ENCODE measurements at regions of chr11 and their contacts with region 1.

Region 1: DNA sequence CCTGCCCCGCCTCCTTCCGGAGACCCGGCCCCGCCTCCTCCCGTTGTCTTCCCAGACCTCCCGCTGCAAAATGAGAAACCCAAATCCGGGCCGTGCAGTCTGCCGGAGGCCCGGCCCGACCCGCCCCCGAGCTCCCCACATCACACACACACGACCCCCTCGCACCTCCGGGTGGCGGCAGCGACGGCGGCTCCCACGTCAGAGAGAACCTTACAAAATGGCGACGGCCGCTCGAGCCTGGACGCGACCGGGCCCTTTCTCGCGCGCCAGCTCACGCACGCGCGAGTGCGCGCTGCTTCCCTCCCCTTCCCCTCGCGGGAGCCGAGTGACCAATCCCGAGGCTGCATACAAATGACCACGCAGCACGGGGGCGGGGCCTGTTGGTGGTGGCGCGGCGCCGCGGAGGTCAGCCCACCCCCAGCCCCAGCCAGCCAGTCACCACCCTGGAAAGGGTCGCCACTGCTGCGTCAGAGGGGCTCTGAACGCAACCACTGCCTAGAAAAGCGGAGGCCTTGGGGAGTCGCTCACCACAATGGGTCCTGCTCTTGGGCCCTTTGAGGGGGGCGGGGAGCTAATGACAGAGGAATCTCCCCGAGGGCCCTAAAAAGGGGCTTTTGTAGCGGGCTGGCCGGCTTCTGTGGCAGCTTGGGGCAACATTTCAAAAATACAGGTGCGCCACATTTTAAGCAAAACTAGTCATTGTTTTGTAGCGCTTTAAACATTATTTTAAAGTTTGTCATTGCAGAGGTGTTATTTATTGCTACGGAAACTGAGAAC is at the start of gene RBM4B:
- DNase-seq: peak; percentile 97
- H3K4me3 ChIP-seq: peak within 1 kb of the TSS; percentile 39 to 49 (median 47)
- H3K27ac ChIP-seq: peak within 1 kb of the TSS; percentile 66 to 85 (median 79)
- H3K4me1 ChIP-seq: peaks cover 23 to 34% of the 10 kb centered on the region in 2 donors
- H3K27me3 ChIP-seq: no peaks in the 10 kb centered on the region
- CTCF ChIP-seq: no peak
- POLR2A ChIP-seq: peak; percentile 67 to 86
- total RNA-seq, gene RBM4B: 16.6 to 24.7 (median 24.2) TPM

Region 2: DNA sequence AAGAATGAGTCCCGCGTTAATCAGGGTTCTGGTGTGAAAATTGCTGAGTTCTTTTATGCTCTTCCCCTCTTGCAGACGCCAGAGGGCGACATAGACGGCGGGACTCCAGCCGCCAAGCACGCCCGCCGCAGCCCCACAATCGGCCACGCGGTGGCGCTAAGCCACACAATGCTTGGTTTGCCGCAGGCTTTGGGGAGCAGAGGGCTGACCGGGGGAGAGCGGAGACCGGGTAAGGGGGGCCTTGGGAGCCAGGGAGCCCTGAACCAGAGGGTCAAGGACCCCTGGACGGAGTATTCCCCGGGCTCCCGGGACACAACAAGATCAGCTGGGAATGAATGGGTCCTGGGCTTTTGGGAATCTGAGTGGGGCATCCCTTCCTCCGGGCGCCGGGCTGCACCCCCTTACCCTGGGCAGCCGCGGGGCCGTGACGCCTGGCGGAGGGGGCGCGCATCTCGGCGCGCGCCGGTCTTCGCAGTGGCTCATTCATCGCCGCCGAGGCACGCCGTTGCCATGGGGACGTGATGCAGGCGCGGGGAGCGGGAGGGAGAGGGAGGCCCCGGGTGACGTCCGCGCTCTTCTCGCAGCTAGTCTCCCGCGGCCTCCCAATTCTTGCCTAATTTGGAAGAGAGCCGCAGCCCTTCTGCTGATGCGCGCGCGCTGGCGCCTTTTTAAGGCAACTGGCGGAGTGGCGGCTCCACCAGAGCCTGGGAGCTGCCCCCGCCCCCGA is 269.1 kb before region 1 on chr11:
- intact Hi-C with region 1: loop called (anchors 5 kb)
- DNase-seq: peak; percentile 84 to 85
- H3K4me3 ChIP-seq: no peak overlapping the region
- H3K27ac ChIP-seq: no peak overlapping the region
- H3K4me1 ChIP-seq: peaks cover 0 to 5% of the 10 kb centered on the region in 2 donors
- H3K27me3 ChIP-seq: no peaks in the 10 kb centered on the region
- CTCF ChIP-seq: peak; percentile 99 to 100 (median 99)
- POLR2A ChIP-seq: no peak

Region 3: GRCh38 chr11:66579017-66579606 is 98.7 kb before region 1 on chr11:
- intact Hi-C with region 1: loop called (anchors 2 kb)
- DNase-seq: peak; percentile 81 to 82
- H3K4me3 ChIP-seq: no peak overlapping the region
- H3K27ac ChIP-seq: no peak overlapping the region
- H3K4me1 ChIP-seq: no peaks in the 10 kb centered on the region
- H3K27me3 ChIP-seq: no peaks in the 10 kb centered on the region
- CTCF ChIP-seq: peak; percentile 62 to 87 (median 80)
- POLR2A ChIP-seq: no peak

Region 4: GRCh38 chr11:66638177-66639065 is 39.4 kb before region 1 on chr11 and contains the start of gene RBM4:
- intact Hi-C with region 1: loop called (anchors 5 kb)
- DNase-seq: peak; percentile 98
- H3K4me3 ChIP-seq: peak within 1 kb of the TSS; percentile 38 to 78 (median 42)
- H3K27ac ChIP-seq: peak within 1 kb of the TSS; percentile 60 to 89 (median 82)
- H3K4me1 ChIP-seq: peaks cover 40 to 49% of the 10 kb centered on the region in 2 donors
- H3K27me3 ChIP-seq: no peaks in the 10 kb centered on the region
- CTCF ChIP-seq: peak in 2 of 6 experiments; percentile 4 to 14
- POLR2A ChIP-seq: peak; percentile 82 to 94
- total RNA-seq, gene RBM4: 104 to 147 (median 131) TPM

Measured in thyroid gland (tissue), 4 donors.